Caki2 (cell line): ENCODE measurements at regions of chr3 and their contacts with region 1.

Region 1: DNA sequence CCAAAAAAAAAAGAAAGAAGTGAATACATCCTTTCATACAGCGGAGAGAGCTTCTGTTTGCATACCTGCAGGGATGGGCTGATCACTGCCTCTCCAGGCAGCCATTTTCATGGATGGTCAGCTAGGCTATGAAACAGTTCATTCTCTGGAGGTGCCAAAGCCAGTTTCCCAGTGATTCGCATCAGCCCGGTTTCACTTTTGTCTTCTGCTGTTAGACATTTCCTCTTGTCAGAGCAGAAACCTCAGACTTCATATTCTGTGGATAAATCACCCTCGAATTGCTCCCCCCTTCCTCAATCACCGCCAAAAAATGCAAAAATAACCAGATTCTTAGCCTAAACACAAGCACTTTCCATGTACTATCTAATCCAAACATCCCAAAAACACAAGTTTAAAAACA is 225.6 kb downstream of the ADAMTS9 start:
- DNase-seq: no peak

Region 2: GRCh38 chr3:64030741-64031140 is 431.5 kb before region 1 on chr3:
- in situ Hi-C with region 1: loop called (anchors 25 kb)
- DNase-seq: peak; percentile 70

Region 3: GRCh38 chr3:64501298-64501906 is 39.2 kb after region 1 on chr3:
- in situ Hi-C with region 1: no loop called
- DNase-seq: no peak